Endothelial cell of umbilical vein (primary cell): ENCODE measurements at regions of chr2 and their contacts with region 1.

Region 1: DNA sequence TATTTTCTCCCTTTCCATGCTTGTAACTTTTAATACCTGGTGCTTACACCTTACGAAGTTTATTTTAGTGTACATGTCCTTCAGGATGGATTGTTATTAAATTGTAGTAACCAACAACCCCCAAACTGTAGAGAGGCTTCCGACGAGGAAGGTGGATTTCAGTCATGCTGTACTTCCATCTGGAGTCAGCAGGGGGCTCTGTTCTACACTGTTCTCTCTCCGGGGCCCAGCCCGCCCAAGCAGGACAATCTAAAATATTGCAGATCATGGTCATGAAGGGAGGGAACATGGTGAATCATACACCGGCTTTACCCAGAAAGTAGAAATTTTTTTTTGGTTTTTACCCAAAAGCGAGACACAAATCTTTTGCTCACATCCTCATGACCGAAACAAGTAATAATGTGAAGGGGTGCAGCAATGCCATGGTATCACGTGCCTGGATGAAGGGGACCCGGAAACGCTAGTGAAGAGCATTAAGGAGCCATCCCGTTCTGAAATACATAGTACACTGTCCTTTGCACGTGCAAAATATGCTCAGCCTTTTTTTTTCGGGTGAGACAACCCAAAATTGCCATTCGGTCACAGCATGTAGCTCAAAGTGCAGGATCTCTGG is 884.8 kb downstream of the EPHA4 start:
- DNase-seq: peak; percentile 52
- H3K4me3 ChIP-seq: no peak overlapping the region
- H3K27ac ChIP-seq: no peak overlapping the region
- H3K4me1 ChIP-seq: no peaks in the 10 kb centered on the region
- H3K27me3 ChIP-seq: no peaks in the 10 kb centered on the region
- CTCF ChIP-seq: peak; percentile 71 to 73
- POLR2A ChIP-seq: no peak

Region 2: DNA sequence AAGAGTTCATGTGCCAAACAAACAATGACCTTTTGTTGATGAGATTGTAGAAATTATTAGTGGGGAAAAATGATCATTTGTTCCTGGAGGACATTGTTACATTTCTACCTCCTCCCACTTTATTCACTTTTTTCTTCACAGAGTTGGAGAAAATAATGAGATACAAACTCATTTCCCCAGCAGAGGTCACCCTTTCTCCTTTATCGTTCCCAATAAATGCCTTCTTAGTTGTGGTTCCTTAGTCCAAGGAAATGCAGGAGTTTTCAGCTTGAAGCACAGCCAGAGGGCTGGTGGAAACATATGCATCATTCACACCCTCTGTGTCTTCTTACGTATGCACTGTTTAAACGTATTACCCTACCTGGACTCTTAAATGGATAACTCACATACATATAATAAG is 951.1 kb before region 1 on chr2:
- CTCF ChIA-PET with region 1: no interaction called
- POLR2A ChIA-PET with region 1: no interaction called
- dilution Hi-C with region 1: no loop called
- intact Hi-C with region 1: loop called (anchors 1 kb)
- DNase-seq: peak; percentile 67
- H3K4me3 ChIP-seq: no peak overlapping the region
- H3K27ac ChIP-seq: no peak overlapping the region
- H3K4me1 ChIP-seq: no peaks in the 10 kb centered on the region
- H3K27me3 ChIP-seq: no peaks in the 10 kb centered on the region
- CTCF ChIP-seq: peak; percentile 18 to 26
- POLR2A ChIP-seq: no peak

Region 3: GRCh38 chr2:220569112-220569897 is 118.0 kb before region 1 on chr2:
- CTCF ChIA-PET with region 1: no interaction called
- POLR2A ChIA-PET with region 1: no interaction called
- dilution Hi-C with region 1: no loop called
- intact Hi-C with region 1: no loop called
- DNase-seq: no peak
- H3K4me3 ChIP-seq: no peak overlapping the region
- H3K27ac ChIP-seq: no peak overlapping the region
- H3K4me1 ChIP-seq: no peaks in the 10 kb centered on the region
- H3K27me3 ChIP-seq: no peaks in the 10 kb centered on the region
- CTCF ChIP-seq: no peak
- POLR2A ChIP-seq: no peak

Region 4: DNA sequence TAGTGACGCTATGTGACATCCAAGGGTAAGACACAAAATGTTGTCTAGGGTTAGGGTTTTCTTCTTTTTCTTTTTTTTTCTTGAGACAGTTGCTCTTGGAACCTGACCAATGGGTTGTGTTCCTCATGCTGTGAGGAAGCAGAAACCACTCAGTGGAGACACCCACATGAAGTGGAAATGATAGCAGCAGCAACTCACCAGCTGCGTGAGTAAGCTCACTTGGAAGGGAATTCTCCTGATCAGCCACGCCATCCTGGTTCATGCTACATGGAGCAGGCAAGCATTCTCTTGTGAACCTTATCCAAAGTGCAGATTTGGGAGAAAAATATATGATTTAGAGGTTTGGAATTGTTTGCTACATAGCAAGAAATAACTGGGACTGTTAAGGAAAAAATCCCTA is 21.0 kb after region 1 on chr2:
- CTCF ChIA-PET with region 1: no interaction called
- POLR2A ChIA-PET with region 1: no interaction called
- dilution Hi-C with region 1: no loop called
- intact Hi-C with region 1: no loop called
- DNase-seq: no peak
- H3K4me3 ChIP-seq: no peak overlapping the region
- H3K27ac ChIP-seq: no peak overlapping the region
- H3K4me1 ChIP-seq: no peaks in the 10 kb centered on the region
- H3K27me3 ChIP-seq: no peaks in the 10 kb centered on the region
- CTCF ChIP-seq: no peak
- POLR2A ChIP-seq: no peak

Region 5: GRCh38 chr2:221025398-221025797 is 338.1 kb after region 1 on chr2:
- CTCF ChIA-PET with region 1: no interaction called
- POLR2A ChIA-PET with region 1: no interaction called
- dilution Hi-C with region 1: no loop called
- intact Hi-C with region 1: no loop called
- DNase-seq: peak; percentile 81
- H3K4me3 ChIP-seq: no peak overlapping the region
- H3K27ac ChIP-seq: no peak overlapping the region
- H3K4me1 ChIP-seq: peaks cover 7% of the 10 kb centered on the region
- H3K27me3 ChIP-seq: no peaks in the 10 kb centered on the region
- CTCF ChIP-seq: no peak
- POLR2A ChIP-seq: no peak

Region 6: GRCh38 chr2:221283896-221284545 is 596.7 kb after region 1 on chr2:
- CTCF ChIA-PET with region 1: no interaction called
- POLR2A ChIA-PET with region 1: no interaction called
- dilution Hi-C with region 1: no loop called
- intact Hi-C with region 1: loop called (anchors 10 kb)
- DNase-seq: no peak
- H3K4me3 ChIP-seq: no peak overlapping the region
- H3K27ac ChIP-seq: no peak overlapping the region
- H3K4me1 ChIP-seq: no peaks in the 10 kb centered on the region
- H3K27me3 ChIP-seq: no peaks in the 10 kb centered on the region
- CTCF ChIP-seq: no peak
- POLR2A ChIP-seq: no peak

Region 7: DNA sequence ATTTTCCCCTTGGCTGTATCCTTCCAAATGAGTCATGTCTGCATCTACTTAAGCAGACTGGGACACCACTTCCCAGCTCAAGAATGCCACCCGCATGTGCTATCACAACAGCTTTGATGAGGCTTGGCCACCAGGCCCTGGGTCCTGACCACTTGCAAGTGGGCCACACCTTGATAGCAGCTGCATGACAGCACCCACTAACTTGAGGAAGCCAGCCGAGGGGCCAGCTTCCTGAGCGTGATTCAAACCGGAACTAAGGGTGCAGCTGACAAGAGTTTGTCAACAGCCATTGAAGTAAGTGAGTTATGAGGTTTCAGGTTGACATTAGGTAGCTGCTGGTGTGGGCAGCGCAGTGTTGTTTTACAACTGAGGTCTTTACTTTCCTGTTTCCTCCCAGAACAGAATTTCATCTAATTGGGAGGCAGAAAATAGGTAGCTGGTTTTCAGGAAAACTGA is 830.4 kb after region 1 on chr2:
- CTCF ChIA-PET with region 1: no interaction called
- POLR2A ChIA-PET with region 1: no interaction called
- dilution Hi-C with region 1: no loop called
- intact Hi-C with region 1: loop called (anchors 2 kb)
- DNase-seq: peak; percentile 72
- H3K4me3 ChIP-seq: no peak overlapping the region
- H3K27ac ChIP-seq: peak overlapping the region; percentile 70
- H3K4me1 ChIP-seq: peaks cover 33% of the 10 kb centered on the region
- H3K27me3 ChIP-seq: no peaks in the 10 kb centered on the region
- CTCF ChIP-seq: no peak
- POLR2A ChIP-seq: no peak

Region 8: DNA sequence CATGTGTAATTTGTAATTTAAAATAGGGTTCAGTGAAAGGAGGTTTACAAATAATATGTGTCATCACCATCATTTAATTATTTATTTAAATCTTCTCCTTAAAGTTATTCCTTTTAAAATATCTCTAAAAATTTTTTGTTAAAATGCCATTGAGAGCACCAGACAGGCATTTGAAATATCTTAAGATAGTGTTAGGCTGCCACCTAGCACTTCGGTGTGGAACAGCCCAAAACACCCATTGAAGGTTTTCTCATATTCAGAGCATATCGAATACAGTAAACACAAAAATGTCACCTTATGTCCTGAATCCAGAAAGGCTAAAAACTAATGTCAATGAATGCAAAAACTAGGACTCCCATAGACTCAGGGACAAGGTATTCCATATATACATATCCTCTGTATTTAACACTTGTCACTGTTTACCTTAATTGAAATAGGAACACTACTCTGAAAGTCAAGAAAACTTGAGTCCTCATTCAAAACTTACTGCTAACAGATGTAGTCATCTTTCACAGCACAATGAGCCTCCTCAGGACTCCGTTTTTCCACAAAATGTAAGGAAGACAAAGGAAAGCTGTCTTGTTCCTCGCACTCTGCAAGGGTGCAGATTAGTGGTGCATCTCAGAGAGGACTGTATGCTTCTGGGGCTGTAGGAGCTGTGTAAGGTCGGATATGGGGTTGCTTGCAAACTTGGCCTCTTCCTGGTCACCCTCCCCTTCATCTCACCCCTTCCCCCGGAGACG is 1281.9 kb after region 1 on chr2:
- CTCF ChIA-PET with region 1: no interaction called
- POLR2A ChIA-PET with region 1: no interaction called
- dilution Hi-C with region 1: no loop called
- intact Hi-C with region 1: loop called (anchors 1 kb)
- DNase-seq: peak; percentile 52
- H3K4me3 ChIP-seq: no peak overlapping the region
- H3K27ac ChIP-seq: no peak overlapping the region
- H3K4me1 ChIP-seq: no peaks in the 10 kb centered on the region
- H3K27me3 ChIP-seq: no peaks in the 10 kb centered on the region
- CTCF ChIP-seq: peak; percentile 44 to 58
- POLR2A ChIP-seq: no peak